Right ventricle myocardium inferior (tissue), 1 donor: ENCODE measurements at regions of chr9 and their contacts with region 1.

Region 1: DNA sequence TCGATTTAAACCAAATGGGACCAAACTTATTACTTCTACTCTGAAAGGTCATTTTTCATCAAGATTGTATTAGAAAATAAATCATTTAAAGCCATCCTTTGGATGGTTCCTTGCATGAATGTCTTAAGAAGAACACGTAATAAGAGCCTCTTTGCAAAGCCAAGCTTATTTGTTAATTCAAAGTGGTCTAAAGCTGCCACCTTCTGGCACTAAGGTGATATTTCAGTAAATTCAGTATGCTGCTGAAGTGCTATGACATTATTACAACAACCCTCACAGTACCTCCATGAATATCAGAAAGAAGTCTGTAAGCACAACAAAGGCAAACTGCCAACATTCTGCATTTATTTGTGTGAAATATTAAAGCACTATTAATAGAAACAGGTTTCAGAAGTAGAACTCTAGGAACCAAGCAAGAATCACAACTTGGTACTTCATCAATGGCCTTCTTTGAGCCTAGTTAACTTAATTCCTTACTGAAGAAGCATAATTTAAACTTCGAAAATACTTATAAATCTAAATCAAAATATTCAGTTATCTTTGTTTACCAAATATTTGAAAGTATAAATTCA is 53.1 kb upstream of the TYRP1 start:
- DNase-seq: no peak
- ATAC-seq: no peak

Region 2: DNA sequence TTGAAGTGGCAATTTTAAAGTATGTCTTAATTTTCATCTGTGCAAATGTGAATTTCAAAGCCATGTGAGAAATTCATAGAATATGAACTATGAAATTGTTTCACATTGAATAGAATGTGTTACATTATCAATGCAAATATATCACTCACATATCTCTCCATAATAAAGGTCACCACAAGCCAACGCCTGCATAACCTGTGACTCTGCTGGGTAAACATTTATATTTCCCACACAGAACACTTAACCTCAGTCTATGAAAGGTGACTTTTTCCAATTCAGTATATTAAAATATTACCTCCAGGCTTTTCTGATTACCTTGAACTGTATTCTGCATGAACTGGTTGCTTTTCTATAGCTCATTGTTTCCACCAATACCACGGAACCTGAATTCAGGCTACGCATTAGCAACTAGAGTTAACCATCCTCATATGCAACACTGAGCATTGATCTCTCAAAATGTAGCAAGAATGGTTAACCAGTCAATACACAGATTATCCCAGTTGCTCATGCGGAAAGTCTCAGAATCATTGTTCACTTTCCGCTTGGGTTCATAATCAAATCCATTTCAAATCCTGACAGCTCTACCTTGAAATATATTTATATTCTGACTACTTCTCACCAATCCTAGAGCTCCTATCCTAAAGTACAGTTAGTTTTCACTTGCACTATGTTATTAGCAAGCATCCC is 73.6 kb before region 1 on chr9:
- intact Hi-C with region 1: loop called (anchors 10 kb)
- DNase-seq: no peak
- ATAC-seq: no peak